GM18951 (cell line): ENCODE measurements at regions of chr13 and their contacts with region 1.

Region 1: GRCh38 chr13:100566543-100566942 is 22.0 kb downstream of the GGACT start:
- POLR2A ChIP-seq: no peak

Region 2: GRCh38 chr13:100235311-100235901 is 331.1 kb before region 1 on chr13:
- in situ Hi-C with region 1: no loop called
- POLR2A ChIP-seq: no peak

Region 3: GRCh38 chr13:100818711-100819110 is 252.2 kb after region 1 on chr13:
- in situ Hi-C with region 1: no loop called
- POLR2A ChIP-seq: no peak

Region 4: DNA sequence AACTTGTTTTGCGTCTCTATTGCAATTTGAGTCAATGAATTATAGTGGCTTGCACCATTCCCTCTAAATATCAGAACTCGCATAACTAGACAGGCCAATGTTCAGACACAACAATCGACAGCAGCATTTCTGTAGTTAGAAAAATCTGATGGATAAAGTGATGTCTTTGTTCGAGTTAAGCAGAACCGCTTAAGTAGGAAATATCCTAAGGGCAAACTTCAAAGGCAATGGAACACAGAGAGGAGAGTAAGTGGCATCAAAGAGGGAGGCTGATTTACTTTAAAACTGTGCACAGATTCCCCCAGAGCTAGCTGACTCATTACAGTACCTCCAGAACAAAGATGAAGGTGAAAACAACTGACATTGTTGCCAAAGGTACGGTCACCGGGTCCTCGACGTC is 515.9 kb after region 1 on chr13:
- in situ Hi-C with region 1: no loop called
- POLR2A ChIP-seq: no peak

Region 5: DNA sequence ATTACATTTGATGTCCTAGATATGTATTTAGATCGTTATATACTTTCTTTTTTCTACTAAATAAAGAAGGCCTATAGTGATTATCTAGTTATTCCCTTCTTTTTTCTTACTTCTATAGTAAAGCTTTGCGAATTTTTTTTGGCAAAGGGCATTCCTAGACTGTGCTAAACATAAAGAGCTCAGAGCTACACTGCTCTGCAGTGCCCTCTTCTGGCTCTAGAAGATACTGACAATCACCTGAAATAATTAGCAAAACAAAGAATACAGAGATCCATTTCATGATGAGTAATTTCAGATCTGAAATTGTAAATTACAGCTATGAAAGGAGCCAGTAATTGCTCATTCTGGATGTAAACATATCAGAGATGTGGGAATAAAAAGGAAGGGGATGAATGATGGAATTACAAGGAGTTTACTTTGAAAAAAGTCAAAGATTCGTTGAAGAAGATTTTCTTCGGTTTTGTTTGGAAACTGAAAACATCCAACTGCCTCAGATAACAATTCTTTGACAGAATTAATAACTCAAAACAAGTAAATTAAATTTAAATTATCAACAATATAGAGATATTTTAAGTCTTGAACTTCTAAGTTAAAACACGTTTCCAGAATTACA is 561.3 kb after region 1 on chr13:
- in situ Hi-C with region 1: loop called (anchors 10 kb)
- POLR2A ChIP-seq: no peak